CD8-positive, alpha-beta T cell (primary cell): ENCODE measurements at regions of chr12 and their contacts with region 1.

Region 1: DNA sequence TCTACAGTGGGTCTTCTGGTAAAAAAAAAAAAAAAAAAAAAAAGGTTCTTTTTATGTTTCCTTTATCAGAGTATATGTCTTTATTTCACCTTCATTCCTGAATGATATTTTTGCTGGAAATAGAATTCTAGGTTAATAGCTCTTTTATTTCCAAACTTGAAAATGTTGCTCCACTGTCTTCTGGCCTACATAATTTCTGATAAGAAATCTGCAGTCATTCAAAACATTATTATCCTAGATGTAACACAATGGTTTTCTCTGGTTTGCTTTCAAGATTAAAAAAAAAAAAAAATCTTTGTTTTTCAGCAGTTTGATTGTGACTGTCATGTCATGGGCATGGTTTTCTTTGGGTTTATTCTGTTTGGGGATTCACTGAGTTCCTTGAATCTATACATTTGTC is 19.5 kb downstream of the DCP1B start:
- DNase-seq: no peak
- ATAC-seq: no peak
- H3K4me3 ChIP-seq: no peak overlapping the region
- H3K4me3 Mint-ChIP-seq: no peak overlapping the region
- H3K27ac ChIP-seq: no peak overlapping the region
- H3K27ac Mint-ChIP-seq: no peak overlapping the region
- H3K4me1 ChIP-seq: no peaks in the 10 kb centered on the region
- H3K4me1 Mint-ChIP-seq: peaks cover 4% of the 10 kb centered on the region
- H3K27me3 ChIP-seq: no peaks in the 10 kb centered on the region
- H3K27me3 Mint-ChIP-seq: no peaks in the 10 kb centered on the region
- CTCF ChIP-seq: no peak

Region 2: GRCh38 chr12:789852-790563 is 1194.8 kb before region 1 on chr12:
- CTCF ChIA-PET with region 1: no interaction called
- POLR2A ChIA-PET with region 1: no interaction called
- intact Hi-C with region 1: loop called in 1 of 2 experiments (anchors 5 kb)
- DNase-seq: no peak
- ATAC-seq: no peak
- H3K4me3 ChIP-seq: no peak overlapping the region
- H3K4me3 Mint-ChIP-seq: peak overlapping the region; percentile 19
- H3K27ac ChIP-seq: no peak overlapping the region
- H3K27ac Mint-ChIP-seq: peak overlapping the region; percentile 55
- H3K4me1 ChIP-seq: peaks cover 54% of the 10 kb centered on the region
- H3K4me1 Mint-ChIP-seq: peaks cover 88% of the 10 kb centered on the region
- H3K27me3 ChIP-seq: no peaks in the 10 kb centered on the region
- H3K27me3 Mint-ChIP-seq: no peaks in the 10 kb centered on the region
- CTCF ChIP-seq: no peak